Activated CD8-positive, alpha-beta T cell treated with anti-CD3 and anti-CD28 coated beads, Interleukin-2, amount 10 ng/mL, durations not matched to agents 7 days and 5 days (primary cell): ENCODE measurements at regions of chr1 and their contacts with region 1.

Region 1: DNA sequence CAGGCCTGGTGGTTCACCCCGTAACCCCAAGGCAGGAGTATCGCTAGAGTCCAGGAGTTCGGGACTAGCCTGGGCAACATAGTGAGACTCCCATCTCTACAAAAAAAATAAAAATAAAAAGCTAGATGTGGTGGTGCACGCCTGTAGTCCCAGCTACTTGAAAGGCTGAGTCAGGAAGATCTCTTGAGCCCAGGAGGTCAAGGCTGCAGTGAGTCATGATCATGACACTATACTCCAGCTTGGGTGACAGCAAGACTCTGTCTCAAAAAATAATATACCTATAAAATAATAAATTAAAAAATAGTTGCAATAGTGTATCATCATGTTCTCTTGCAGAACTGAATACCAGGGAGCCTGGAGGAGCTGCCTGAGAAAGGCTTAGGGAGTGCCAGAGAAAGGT is 19.9 kb upstream of the TMEM39B start:
- DNase-seq: no peak
- ATAC-seq: no peak
- H3K4me3 Mint-ChIP-seq: no peak overlapping the region
- H3K27ac Mint-ChIP-seq: no peak overlapping the region
- H3K4me1 Mint-ChIP-seq: no peaks in the 10 kb centered on the region
- H3K27me3 Mint-ChIP-seq: no peaks in the 10 kb centered on the region

Region 2: GRCh38 chr1:32063261-32063681 is 10.4 kb after region 1 on chr1:
- CTCF ChIA-PET with region 1: interaction called, 20 read pairs
- POLR2A ChIA-PET with region 1: interaction called, 3 read pairs
- DNase-seq: no peak
- ATAC-seq: no peak
- H3K4me3 Mint-ChIP-seq: no peak overlapping the region
- H3K27ac Mint-ChIP-seq: peak overlapping the region; percentile 40
- H3K4me1 Mint-ChIP-seq: peaks cover 21% of the 10 kb centered on the region
- H3K27me3 Mint-ChIP-seq: no peaks in the 10 kb centered on the region

Region 3: DNA sequence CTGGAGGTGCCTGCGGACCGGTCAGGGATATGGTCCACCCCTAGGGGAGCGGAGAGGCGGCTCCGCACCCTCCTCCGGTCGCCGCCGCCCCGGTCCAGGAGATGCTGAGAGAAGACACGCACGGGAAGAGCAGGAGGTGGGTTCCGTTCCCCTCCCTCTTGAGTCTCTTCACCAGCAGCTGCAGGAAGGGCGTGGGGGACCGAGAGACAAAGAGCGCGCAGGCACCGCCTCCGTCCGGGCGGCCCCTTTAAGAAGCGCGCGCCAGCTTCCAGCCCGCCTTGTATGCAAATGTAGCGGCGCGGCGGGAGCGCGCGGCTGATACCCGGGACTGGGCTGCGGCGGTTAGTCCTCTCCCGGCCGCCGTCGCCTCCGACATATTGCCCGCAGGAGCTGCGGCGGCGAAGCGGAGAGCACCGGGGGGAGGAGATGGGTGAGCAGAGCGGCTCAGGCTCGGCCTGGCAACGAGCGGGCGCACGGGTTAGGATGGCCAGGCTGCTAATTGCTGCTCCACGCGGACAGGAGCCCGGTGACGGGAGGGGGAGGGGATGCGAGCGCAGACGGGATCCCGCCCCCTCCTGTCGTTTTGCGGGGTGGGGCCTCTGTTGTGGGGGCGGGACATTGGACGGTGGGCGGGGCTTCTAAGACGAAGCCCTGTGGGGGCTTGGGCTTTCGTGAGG is 19.9 kb after region 1 on chr1 and contains the start of gene TMEM39B:
- CTCF ChIA-PET with region 1: interaction called, 11 read pairs
- POLR2A ChIA-PET with region 1: no interaction called
- DNase-seq: peak; percentile 97
- ATAC-seq: peak; percentile 90
- H3K4me3 Mint-ChIP-seq: peak within 1 kb of the TSS; percentile 76
- H3K27ac Mint-ChIP-seq: peak within 1 kb of the TSS; percentile 87
- H3K4me1 Mint-ChIP-seq: peaks cover 38% of the 10 kb centered on the region
- H3K27me3 Mint-ChIP-seq: no peaks in the 10 kb centered on the region
- total RNA-seq, gene TMEM39B: 32.6 to 36.2 TPM

Region 4: GRCh38 chr1:32094746-32095521 is 42.0 kb after region 1 on chr1:
- CTCF ChIA-PET with region 1: no interaction called
- POLR2A ChIA-PET with region 1: no interaction called
- DNase-seq: no peak
- ATAC-seq: no peak
- H3K4me3 Mint-ChIP-seq: no peak overlapping the region
- H3K27ac Mint-ChIP-seq: no peak overlapping the region
- H3K4me1 Mint-ChIP-seq: no peaks in the 10 kb centered on the region
- H3K27me3 Mint-ChIP-seq: no peaks in the 10 kb centered on the region

Region 5: GRCh38 chr1:32151319-32151787 is 98.5 kb after region 1 on chr1:
- CTCF ChIA-PET with region 1: no interaction called
- POLR2A ChIA-PET with region 1: no interaction called
- DNase-seq: no peak
- ATAC-seq: no peak
- H3K4me3 Mint-ChIP-seq: no peak overlapping the region
- H3K27ac Mint-ChIP-seq: no peak overlapping the region
- H3K4me1 Mint-ChIP-seq: peaks cover 2% of the 10 kb centered on the region
- H3K27me3 Mint-ChIP-seq: no peaks in the 10 kb centered on the region